Activated CD8-positive, alpha-beta T cell treated with anti-CD3 and anti-CD28 coated beads, Interleukin-2, amount 10 ng/mL, durations not matched to agents 7 days and 5 days (primary cell): ENCODE measurements at regions of chr17 and their contacts with region 1.

Region 1: DNA sequence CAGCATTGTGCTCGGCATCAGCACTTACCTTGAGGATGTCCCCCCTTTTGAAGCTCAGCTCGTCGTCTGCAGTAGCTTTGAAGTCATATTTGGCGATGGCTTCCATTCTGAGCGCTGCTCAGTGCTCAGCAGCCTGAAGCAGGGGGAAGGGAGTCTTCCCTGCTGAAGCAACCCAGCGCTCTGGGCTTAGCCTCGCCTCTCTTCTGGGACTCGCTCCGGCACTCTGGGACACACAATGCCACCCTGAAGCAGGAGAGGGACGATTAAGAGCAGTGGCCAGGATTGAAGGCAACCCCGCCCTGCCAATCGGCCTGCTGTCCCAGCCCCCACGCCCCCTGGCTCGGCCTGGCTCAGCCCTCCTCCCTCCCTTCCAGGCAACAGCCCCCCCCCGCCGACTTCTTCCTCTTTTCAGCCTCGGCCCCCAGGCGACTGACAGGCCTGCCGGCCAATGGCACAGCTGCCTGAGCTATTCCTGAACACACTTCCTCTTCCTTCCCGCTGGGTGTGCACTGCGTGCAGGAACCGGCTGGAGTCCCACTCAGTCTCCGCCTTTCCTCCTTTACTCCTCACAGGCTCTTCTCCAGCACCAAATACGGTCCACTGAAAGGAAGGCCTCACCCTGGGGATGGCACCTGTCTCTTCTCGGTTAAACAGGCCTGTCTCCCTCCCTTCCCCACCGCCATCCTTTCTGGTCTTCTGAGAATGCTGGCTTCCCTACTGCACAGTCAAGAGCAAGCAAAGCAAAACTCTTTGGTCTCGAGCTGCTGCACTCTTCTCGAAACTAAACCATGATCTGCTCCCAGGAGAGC is 11.8 kb downstream of the GRB2 start:
- DNase-seq: peak; percentile 89
- ATAC-seq: peak; percentile 95
- H3K4me3 Mint-ChIP-seq: peak overlapping the region; percentile 89
- H3K27ac Mint-ChIP-seq: peak overlapping the region; percentile 73
- H3K4me1 Mint-ChIP-seq: peaks cover 68% of the 10 kb centered on the region
- H3K27me3 Mint-ChIP-seq: no peaks in the 10 kb centered on the region

Region 2: GRCh38 chr17:75289115-75289831 is 104.5 kb before region 1 on chr17 and contains the start of gene SLC25A19:
- CTCF ChIA-PET with region 1: interaction called, 14 read pairs
- POLR2A ChIA-PET with region 1: interaction called, 6 read pairs
- DNase-seq: peak; percentile 99
- ATAC-seq: peak; percentile 92
- H3K4me3 Mint-ChIP-seq: peak within 1 kb of the TSS; percentile 97
- H3K27ac Mint-ChIP-seq: peak within 1 kb of the TSS; percentile 100
- H3K4me1 Mint-ChIP-seq: peaks cover 27% of the 10 kb centered on the region
- H3K27me3 Mint-ChIP-seq: no peaks in the 10 kb centered on the region
- total RNA-seq, gene SLC25A19: 41.1 to 43.6 TPM

Region 3: GRCh38 chr17:75338335-75338734 is 55.4 kb before region 1 on chr17:
- CTCF ChIA-PET with region 1: interaction called, 15 read pairs
- POLR2A ChIA-PET with region 1: interaction called, 4 read pairs
- DNase-seq: no peak
- ATAC-seq: peak; percentile 54
- H3K4me3 Mint-ChIP-seq: peak overlapping the region; percentile 60
- H3K27ac Mint-ChIP-seq: peak overlapping the region; percentile 88
- H3K4me1 Mint-ChIP-seq: peaks cover 81% of the 10 kb centered on the region
- H3K27me3 Mint-ChIP-seq: no peaks in the 10 kb centered on the region

Region 4: DNA sequence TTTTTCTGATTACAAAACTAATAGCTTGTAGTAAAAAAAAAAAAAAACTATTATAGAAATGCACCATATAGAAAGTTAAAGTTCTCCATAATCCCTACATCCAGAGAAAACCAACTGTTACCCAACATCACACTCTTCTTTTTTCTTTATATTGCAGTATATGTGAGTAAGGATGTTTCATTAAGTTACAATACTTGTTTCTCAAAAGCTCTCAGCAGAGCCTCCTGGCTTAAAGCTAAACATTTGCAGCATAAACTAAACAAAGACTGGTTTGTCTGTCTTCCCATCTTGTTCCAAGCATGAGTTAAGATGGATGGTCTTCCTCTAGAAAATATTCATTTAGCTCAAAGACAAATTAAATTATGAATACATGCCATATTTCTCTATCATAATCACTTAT is 13.4 kb before region 1 on chr17:
- CTCF ChIA-PET with region 1: interaction called, 23 read pairs
- POLR2A ChIA-PET with region 1: interaction called, 3 read pairs
- DNase-seq: no peak
- ATAC-seq: no peak
- H3K4me3 Mint-ChIP-seq: no peak overlapping the region
- H3K27ac Mint-ChIP-seq: no peak overlapping the region
- H3K4me1 Mint-ChIP-seq: peaks cover 23% of the 10 kb centered on the region
- H3K27me3 Mint-ChIP-seq: no peaks in the 10 kb centered on the region

Region 5: DNA sequence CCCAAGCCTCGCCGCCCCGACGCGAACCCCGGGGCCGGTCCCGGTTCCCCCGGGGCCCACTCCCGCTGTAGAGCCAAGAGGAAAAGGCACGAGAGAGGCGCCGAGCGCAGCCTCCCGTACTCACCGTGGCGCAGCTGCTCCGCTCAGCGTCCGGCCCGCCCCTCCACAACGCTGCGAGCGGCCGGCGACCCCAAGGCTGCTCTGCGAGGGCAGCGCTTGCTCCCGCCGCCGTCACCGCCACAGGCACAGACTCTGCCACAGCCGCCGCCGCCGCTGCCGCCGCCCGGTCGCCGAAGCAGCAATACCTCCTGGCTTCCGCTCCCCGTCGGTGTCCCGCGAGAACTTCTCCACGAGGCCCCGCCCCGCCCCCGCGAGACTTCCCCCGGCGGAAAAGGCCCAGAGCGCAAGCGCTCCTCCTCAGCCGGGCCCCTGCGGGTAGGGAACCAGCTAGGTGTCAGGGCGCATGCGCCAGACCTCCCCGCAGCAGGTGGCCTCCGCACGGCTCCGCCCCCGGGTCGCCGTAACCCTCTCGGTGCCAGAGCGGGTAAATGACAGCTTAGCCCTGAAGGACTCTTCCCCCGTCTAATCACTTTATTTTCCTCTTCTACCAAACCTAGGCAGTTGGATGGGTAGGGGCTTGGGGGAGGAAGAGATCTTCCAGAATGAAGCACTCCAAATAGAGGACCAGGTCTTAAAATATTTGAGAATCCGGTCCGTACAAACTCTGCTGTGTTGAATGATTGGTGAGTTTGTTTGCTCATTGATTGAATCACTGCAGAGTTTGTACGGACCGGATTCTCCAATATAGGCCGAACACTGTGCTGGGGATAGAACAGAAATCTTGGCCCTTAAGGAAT is 11.9 kb after region 1 on chr17 and contains the start of gene GRB2:
- CTCF ChIA-PET with region 1: interaction called, 34 read pairs
- POLR2A ChIA-PET with region 1: interaction called, 10 read pairs
- DNase-seq: peak; percentile 100
- ATAC-seq: peak; percentile 87
- H3K4me3 Mint-ChIP-seq: peak within 1 kb of the TSS; percentile 97
- H3K27ac Mint-ChIP-seq: peak within 1 kb of the TSS; percentile 95
- H3K4me1 Mint-ChIP-seq: peaks cover 49% of the 10 kb centered on the region
- H3K27me3 Mint-ChIP-seq: no peaks in the 10 kb centered on the region
- total RNA-seq, gene GRB2: 166 to 178 TPM